ENCODE measurements at regions of chr7 and their contacts with region 1.

Region 1: GRCh38 chr7:22854158-22855048 is 31.8 kb upstream of the TOMM7 start:
- DNase-seq: peak; percentile 66 to 88
- H3K4me3 ChIP-seq: peak overlapping the region; percentile 81
- H3K27ac ChIP-seq: peak overlapping the region; percentile 52
- H3K4me1 ChIP-seq: peaks cover 49% of the 10 kb centered on the region
- H3K27me3 ChIP-seq: no peaks in the 10 kb centered on the region
- CTCF ChIP-seq: peak; percentile 76; the same call in 1 of the 2 replicates

Region 2: GRCh38 chr7:22697876-22698606 is 156.4 kb before region 1 on chr7:
- CTCF ChIA-PET with region 1: no interaction called
- POLR2A ChIA-PET with region 1: interaction called, 15 read pairs
- intact Hi-C with region 1: no loop called
- DNase-seq: peak; percentile 35 to 60
- H3K4me3 ChIP-seq: no peak overlapping the region
- H3K27ac ChIP-seq: no peak overlapping the region
- H3K4me1 ChIP-seq: peaks cover 15% of the 10 kb centered on the region; the same call in 1 of the 2 replicates
- H3K27me3 ChIP-seq: no peaks in the 10 kb centered on the region
- CTCF ChIP-seq: no peak

Region 3: GRCh38 chr7:22759721-22760120 is 94.7 kb before region 1 on chr7:
- CTCF ChIA-PET with region 1: no interaction called
- POLR2A ChIA-PET with region 1: no interaction called
- intact Hi-C with region 1: no loop called
- DNase-seq: no peak
- H3K4me3 ChIP-seq: no peak overlapping the region
- H3K27ac ChIP-seq: no peak overlapping the region
- H3K4me1 ChIP-seq: no peaks in the 10 kb centered on the region
- H3K27me3 ChIP-seq: no peaks in the 10 kb centered on the region
- CTCF ChIP-seq: no peak

Region 4: DNA sequence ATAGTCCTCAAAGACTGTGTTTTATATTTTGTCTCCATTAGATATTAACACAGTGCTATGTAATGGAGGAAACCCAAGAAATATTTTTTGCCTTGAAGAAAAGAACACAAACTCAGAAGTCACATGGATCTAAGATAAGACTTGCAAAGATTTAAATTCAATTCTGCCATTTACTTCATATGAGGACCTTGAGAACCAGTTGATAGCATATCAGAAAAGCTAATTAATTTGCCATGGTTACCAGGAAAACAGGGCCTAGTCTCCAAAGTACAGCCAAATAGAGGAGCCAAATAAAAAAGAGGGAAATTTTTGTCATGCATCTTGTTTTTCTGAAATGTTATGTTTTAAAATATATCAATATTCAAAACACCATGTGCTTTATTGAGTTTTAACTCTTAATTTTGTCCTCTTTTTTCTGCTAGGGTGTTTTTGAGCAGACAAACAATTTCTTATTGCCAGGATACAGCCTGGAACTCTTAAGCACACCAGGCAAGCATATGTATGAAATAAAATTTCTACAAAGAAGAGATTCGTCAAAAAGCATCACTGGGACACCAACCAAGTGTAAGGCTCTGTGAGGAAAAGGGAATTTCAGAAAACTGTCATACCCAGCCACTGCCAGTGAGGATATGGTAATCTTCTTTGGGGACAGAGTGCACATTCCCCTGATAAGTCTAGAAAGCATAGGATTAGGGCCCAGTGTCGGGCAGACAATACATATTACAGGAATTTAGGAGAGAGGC is 21.1 kb before region 1 on chr7:
- CTCF ChIA-PET with region 1: no interaction called
- POLR2A ChIA-PET with region 1: no interaction called
- intact Hi-C with region 1: no loop called
- DNase-seq: no peak
- H3K4me3 ChIP-seq: no peak overlapping the region
- H3K27ac ChIP-seq: no peak overlapping the region
- H3K4me1 ChIP-seq: no peaks in the 10 kb centered on the region
- H3K27me3 ChIP-seq: no peaks in the 10 kb centered on the region
- CTCF ChIP-seq: no peak

Region 5: DNA sequence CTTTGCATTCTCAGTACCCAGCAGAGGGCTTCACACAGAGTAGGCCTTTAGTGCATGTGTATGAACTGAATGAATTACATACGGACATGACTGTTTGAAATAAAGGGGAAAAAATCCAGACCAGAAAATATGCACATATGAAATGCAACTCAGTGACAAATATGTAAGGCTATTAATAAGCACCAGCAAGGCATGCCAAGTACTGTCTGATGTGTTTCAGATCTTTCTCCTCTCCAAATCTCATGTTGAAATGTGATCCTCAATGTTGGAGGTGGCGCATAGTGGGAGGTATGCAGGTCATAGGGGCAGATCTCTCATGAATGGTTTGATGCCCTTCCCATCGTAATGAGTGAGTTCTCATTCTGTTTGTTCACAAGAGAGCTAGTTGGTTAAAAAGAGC is 55.5 kb after region 1 on chr7:
- CTCF ChIA-PET with region 1: no interaction called
- POLR2A ChIA-PET with region 1: no interaction called
- intact Hi-C with region 1: loop called (anchors 5 kb)
- DNase-seq: no peak
- H3K4me3 ChIP-seq: no peak overlapping the region
- H3K27ac ChIP-seq: no peak overlapping the region
- H3K4me1 ChIP-seq: no peaks in the 10 kb centered on the region
- H3K27me3 ChIP-seq: no peaks in the 10 kb centered on the region
- CTCF ChIP-seq: no peak

Region 6: DNA sequence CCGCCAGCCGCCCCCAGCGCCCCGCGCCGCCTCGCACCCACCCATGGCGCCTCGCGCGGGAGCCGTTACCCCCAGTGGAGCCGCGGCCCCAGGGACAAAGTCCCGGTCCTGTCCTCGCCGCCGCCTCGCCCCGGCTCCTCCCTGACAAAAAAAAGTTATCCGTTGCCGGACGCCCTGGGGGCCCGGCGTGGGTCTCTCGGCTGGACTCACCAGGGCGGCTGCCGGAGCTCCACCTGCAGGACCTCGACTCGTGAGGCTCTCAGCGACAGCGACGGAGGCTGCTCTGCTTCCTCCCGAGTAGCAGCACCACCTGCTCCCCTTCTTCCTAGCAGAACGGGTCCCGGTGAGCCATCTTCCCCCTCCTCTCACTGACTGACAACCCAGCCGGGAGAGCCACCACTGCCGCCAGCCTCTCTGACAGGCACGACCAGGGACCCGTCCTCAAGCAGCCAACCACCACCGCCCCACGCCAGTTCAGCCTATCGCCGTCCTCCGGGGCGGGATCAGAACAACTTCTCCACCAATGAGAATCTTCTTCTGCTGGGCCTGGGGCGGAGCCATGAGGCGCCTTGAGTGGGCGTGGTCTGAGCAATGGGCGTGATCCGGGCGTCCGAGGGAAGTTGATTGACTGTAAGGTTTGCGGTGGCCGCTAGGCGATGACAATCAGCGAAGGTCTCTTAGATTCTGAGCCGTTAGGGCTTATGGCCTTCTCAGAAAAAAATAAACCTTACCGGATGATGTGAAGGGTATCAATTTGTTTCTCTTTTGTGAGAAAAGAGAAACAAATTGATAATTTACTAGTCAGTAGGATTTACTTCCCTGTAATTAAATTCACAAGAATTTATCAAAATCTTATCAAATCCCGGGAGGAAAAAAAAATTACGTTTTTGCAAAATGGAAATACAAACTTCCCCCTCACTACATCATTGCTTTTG is 159.6 kb after region 1 on chr7 and contains the start of gene HYCC1:
- CTCF ChIA-PET with region 1: no interaction called
- POLR2A ChIA-PET with region 1: no interaction called
- intact Hi-C with region 1: loop called (anchors 1 kb)
- DNase-seq: peak; percentile 98 to 100
- H3K4me3 ChIP-seq: peak within 1 kb of the TSS; percentile 58
- H3K27ac ChIP-seq: no peak within 1 kb of the TSS
- H3K4me1 ChIP-seq: peaks cover 11% of the 10 kb centered on the region
- H3K27me3 ChIP-seq: no peaks in the 10 kb centered on the region
- CTCF ChIP-seq: peak; percentile 68
- total RNA-seq, gene HYCC1: 25.1 and 28.2 TPM in 2 replicates

Region 7: GRCh38 chr7:23181684-23182553 is 327.5 kb after region 1 on chr7 and contains the start of gene NUP42:
- CTCF ChIA-PET with region 1: no interaction called
- POLR2A ChIA-PET with region 1: no interaction called
- intact Hi-C with region 1: loop called (anchors 2 kb)
- DNase-seq: peak; percentile 99 to 100
- H3K4me3 ChIP-seq: peak within 1 kb of the TSS; percentile 98
- H3K27ac ChIP-seq: peak within 1 kb of the TSS; percentile 87
- H3K4me1 ChIP-seq: peaks cover 27% of the 10 kb centered on the region
- H3K27me3 ChIP-seq: no peaks in the 10 kb centered on the region
- CTCF ChIP-seq: no peak
- total RNA-seq, gene NUP42: 41.3 and 51.3 TPM in 2 replicates

Measured in PC-9 (cell line).